ENCODE measurements at regions of chr5 and their contacts with region 1.

Region 1: DNA sequence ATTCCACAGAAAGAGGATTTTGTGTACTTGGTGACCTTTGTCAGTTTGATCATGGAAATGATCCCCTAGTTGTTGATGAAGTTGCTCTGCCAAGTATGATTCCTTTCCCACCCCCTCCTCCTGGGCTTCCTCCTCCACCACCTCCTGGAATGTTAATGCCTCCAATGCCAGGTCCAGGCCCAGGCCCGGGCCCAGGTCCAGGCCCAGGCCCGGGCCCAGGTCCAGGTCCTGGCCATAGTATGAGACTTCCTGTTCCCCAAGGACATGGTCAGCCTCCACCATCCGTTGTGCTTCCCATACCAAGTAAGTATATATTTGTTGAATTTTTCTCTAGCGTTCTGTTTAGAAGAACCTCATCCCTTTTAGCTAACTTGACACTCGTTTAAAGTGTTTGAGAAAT is 30.0 kb downstream of the RBM27 start:
- DNase-seq: no peak
- ATAC-seq: no peak
- H3K4me3 ChIP-seq: no peak overlapping the region
- H3K4me3 Mint-ChIP-seq: no peak overlapping the region
- H3K27ac ChIP-seq: no peak overlapping the region
- H3K27ac Mint-ChIP-seq: no peak overlapping the region
- H3K4me1 ChIP-seq: no peaks in the 10 kb centered on the region
- H3K4me1 Mint-ChIP-seq: no peaks in the 10 kb centered on the region
- H3K27me3 ChIP-seq: no peaks in the 10 kb centered on the region
- H3K27me3 Mint-ChIP-seq: no peaks in the 10 kb centered on the region
- CTCF ChIP-seq: no peak

Region 2: DNA sequence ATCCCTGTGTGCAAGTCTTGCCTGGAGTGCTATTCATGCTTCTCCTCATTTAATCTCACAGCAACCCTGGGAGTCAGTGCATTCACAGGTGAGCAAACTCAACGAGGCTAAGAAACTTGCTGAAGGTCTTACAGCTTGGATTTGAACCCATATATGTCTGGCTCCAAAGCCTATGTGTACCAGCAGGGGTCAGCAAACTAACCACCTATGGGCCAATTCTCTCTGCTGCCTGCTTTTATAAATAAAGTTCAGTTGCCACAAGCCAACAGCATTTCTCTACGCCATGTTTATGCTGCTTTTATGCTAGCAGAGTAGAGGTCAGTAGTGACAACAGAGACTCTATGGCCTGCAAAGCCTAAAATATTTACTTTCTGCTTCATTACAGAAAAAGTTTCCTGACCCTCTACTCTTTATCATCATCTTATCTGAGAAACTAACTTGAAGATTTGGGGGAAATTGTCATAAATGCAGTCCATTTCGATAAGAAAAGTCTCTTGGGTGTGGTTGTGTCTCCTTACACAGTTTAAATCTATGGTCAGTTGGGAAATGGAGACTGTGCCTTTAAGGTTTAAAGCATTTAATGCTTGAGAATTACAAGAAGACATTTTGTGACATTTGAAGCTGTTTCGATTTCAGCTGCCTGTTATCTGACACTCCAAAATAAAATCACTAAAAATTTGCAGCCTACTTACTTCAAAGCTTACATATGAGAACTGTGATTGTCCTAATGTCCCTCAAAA is 536.0 kb before region 1 on chr5:
- CTCF ChIA-PET with region 1: no interaction called
- POLR2A ChIA-PET with region 1: no interaction called
- intact Hi-C with region 1: no loop called
- DNase-seq: peak in 2 of 9 experiments; percentile 11 to 26
- ATAC-seq: no peak
- H3K4me3 ChIP-seq: no peak overlapping the region
- H3K4me3 Mint-ChIP-seq: no peak overlapping the region
- H3K27ac ChIP-seq: no peak overlapping the region
- H3K27ac Mint-ChIP-seq: no peak overlapping the region
- H3K4me1 ChIP-seq: no peaks in the 10 kb centered on the region
- H3K4me1 Mint-ChIP-seq: no peaks in the 10 kb centered on the region
- H3K27me3 ChIP-seq: no peaks in the 10 kb centered on the region
- H3K27me3 Mint-ChIP-seq: no peaks in the 10 kb centered on the region
- CTCF ChIP-seq: no peak

Region 3: GRCh38 chr5:146007270-146007669 is 226.2 kb before region 1 on chr5:
- CTCF ChIA-PET with region 1: no interaction called
- POLR2A ChIA-PET with region 1: no interaction called
- intact Hi-C with region 1: no loop called
- DNase-seq: no peak
- ATAC-seq: no peak
- H3K4me3 ChIP-seq: no peak overlapping the region
- H3K4me3 Mint-ChIP-seq: no peak overlapping the region
- H3K27ac ChIP-seq: no peak overlapping the region
- H3K27ac Mint-ChIP-seq: no peak overlapping the region
- H3K4me1 ChIP-seq: no peaks in the 10 kb centered on the region
- H3K4me1 Mint-ChIP-seq: no peaks in the 10 kb centered on the region
- H3K27me3 ChIP-seq: no peaks in the 10 kb centered on the region
- H3K27me3 Mint-ChIP-seq: peaks cover 9% of the 10 kb centered on the region
- CTCF ChIP-seq: no peak

Region 4: GRCh38 chr5:146218168-146218567 is 15.3 kb before region 1 on chr5:
- CTCF ChIA-PET with region 1: no interaction called
- POLR2A ChIA-PET with region 1: no interaction called
- intact Hi-C with region 1: no loop called
- DNase-seq: no peak
- ATAC-seq: no peak
- H3K4me3 ChIP-seq: no peak overlapping the region
- H3K4me3 Mint-ChIP-seq: no peak overlapping the region
- H3K27ac ChIP-seq: no peak overlapping the region
- H3K27ac Mint-ChIP-seq: no peak overlapping the region
- H3K4me1 ChIP-seq: peaks cover 16% of the 10 kb centered on the region
- H3K4me1 Mint-ChIP-seq: peaks cover 54% of the 10 kb centered on the region
- H3K27me3 ChIP-seq: no peaks in the 10 kb centered on the region
- H3K27me3 Mint-ChIP-seq: no peaks in the 10 kb centered on the region
- CTCF ChIP-seq: no peak

Region 5: GRCh38 chr5:146273109-146273508 is 39.7 kb after region 1 on chr5:
- CTCF ChIA-PET with region 1: no interaction called
- POLR2A ChIA-PET with region 1: no interaction called
- intact Hi-C with region 1: loop called in 1 of 2 experiments (anchors 5 kb)
- DNase-seq: no peak
- ATAC-seq: no peak
- H3K4me3 ChIP-seq: no peak overlapping the region
- H3K4me3 Mint-ChIP-seq: no peak overlapping the region
- H3K27ac ChIP-seq: no peak overlapping the region
- H3K27ac Mint-ChIP-seq: no peak overlapping the region
- H3K4me1 ChIP-seq: no peaks in the 10 kb centered on the region
- H3K4me1 Mint-ChIP-seq: no peaks in the 10 kb centered on the region
- H3K27me3 ChIP-seq: no peaks in the 10 kb centered on the region
- H3K27me3 Mint-ChIP-seq: no peaks in the 10 kb centered on the region
- CTCF ChIP-seq: no peak